ENCODE measurements at regions of chr2 and their contacts with region 1.

Region 1: GRCh38 chr2:239299218-239299939 is 101.4 kb downstream of the HDAC4 start:
- DNase-seq: peak; percentile 87
- ATAC-seq: peak; percentile 78
- H3K4me3 ChIP-seq: peak overlapping the region; percentile 7 to 45 (median 16); a peak in 3 of 6 replicates
- H3K27ac ChIP-seq: no peak overlapping the region
- H3K4me1 ChIP-seq: peaks cover 66% of the 10 kb centered on the region
- H3K27me3 ChIP-seq: no peaks in the 10 kb centered on the region
- CTCF ChIP-seq: no peak
- EP300 ChIP-seq: no peak; a peak in 1 of 4 replicates
- POLR2A ChIP-seq: no peak
- RAD21 ChIP-seq: peak; percentile 31; the same call in 1 of the 2 replicates

Region 2: DNA sequence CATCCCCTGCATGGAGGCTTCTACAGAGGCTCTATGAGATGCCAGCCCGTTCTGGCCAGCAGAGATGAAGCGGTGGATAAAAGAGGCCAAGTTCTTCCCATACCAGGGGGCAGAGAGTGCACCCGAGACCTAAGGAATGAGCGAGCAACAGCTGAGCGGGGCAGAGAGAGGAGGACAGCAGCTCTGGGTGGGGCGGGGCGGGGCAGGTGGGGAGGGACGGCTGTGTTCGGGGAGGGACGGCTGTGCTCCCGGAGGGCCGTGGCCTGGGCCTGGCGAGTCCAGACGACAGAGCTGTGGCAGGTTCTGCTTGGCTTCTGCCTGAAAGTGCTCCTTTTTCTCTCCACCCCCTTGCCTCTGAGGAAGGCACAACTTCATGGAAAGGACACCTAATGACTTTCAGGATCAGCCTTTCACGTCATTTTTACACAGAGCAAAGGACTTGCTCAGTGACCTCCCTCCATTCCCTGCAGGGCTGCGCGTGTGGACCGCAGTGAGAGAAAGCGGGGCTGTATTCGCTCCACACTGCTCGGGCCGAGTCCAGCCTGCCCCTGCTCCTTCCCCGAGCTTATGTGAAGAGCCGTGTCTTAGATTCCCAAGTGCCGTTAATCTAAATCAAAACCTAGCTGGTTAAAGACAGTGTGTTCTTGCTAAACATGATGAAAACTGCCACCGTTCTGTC is 131.5 kb before region 1 on chr2:
- CTCF ChIA-PET with region 1: no interaction called
- POLR2A ChIA-PET with region 1: no interaction called
- in situ Hi-C with region 1: no loop called
- intact Hi-C with region 1: no loop called
- DNase-seq: no peak
- ATAC-seq: no peak
- H3K4me3 ChIP-seq: no peak overlapping the region
- H3K27ac ChIP-seq: no peak overlapping the region
- H3K4me1 ChIP-seq: no peaks in the 10 kb centered on the region
- H3K27me3 ChIP-seq: no peaks in the 10 kb centered on the region
- CTCF ChIP-seq: no peak
- EP300 ChIP-seq: no peak
- POLR2A ChIP-seq: no peak
- RAD21 ChIP-seq: no peak

Region 3: DNA sequence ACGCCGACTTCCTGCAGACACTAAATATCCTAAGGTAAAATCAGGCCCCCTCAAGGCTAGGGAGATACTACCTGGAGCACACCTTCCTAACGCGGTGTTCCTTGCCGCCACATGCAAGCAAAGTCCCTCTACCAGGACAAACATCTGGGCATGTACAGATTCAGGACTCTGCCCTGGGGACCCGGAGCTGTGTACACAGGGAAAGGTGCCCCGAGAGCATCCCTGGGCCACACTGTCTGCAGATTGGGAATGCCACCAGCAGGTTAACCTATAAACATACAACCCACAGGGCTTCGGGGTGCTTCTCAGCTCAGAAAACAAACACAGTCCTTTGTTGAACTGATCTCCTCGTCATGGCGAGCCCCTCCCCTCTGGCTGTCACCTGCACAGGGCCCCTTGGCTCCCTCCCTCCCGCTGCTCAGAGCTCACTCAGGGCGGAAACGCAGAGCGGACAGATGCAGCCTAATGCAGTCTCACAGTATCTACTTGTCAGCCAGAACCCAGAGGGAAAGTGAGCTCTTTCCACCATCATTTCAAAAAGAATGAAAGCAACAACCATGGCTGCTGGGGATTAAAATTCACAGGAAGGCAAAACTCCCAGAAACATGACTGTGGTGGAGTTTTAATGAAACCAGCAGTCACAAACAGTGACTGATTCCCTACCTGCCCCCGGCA is 117.3 kb before region 1 on chr2:
- CTCF ChIA-PET with region 1: no interaction called
- POLR2A ChIA-PET with region 1: no interaction called
- in situ Hi-C with region 1: no loop called
- intact Hi-C with region 1: loop called (anchors 1 kb)
- DNase-seq: peak; percentile 71
- ATAC-seq: peak; percentile 89
- H3K4me3 ChIP-seq: no peak overlapping the region
- H3K27ac ChIP-seq: peak overlapping the region; percentile 12
- H3K4me1 ChIP-seq: peaks cover 24% of the 10 kb centered on the region
- H3K27me3 ChIP-seq: no peaks in the 10 kb centered on the region
- CTCF ChIP-seq: no peak
- EP300 ChIP-seq: no peak
- POLR2A ChIP-seq: no peak
- RAD21 ChIP-seq: no peak

Region 4: GRCh38 chr2:239369631-239370161 is 70.3 kb after region 1 on chr2:
- CTCF ChIA-PET with region 1: no interaction called
- POLR2A ChIA-PET with region 1: no interaction called
- in situ Hi-C with region 1: no loop called
- intact Hi-C with region 1: no loop called
- DNase-seq: no peak
- ATAC-seq: no peak
- H3K4me3 ChIP-seq: no peak overlapping the region
- H3K27ac ChIP-seq: no peak overlapping the region
- H3K4me1 ChIP-seq: no peaks in the 10 kb centered on the region
- H3K27me3 ChIP-seq: no peaks in the 10 kb centered on the region
- CTCF ChIP-seq: no peak
- EP300 ChIP-seq: no peak
- POLR2A ChIP-seq: no peak
- RAD21 ChIP-seq: no peak

Measured in HepG2 (cell line).